ENCODE measurements at regions of chr22 and their contacts with region 1.

Region 1: DNA sequence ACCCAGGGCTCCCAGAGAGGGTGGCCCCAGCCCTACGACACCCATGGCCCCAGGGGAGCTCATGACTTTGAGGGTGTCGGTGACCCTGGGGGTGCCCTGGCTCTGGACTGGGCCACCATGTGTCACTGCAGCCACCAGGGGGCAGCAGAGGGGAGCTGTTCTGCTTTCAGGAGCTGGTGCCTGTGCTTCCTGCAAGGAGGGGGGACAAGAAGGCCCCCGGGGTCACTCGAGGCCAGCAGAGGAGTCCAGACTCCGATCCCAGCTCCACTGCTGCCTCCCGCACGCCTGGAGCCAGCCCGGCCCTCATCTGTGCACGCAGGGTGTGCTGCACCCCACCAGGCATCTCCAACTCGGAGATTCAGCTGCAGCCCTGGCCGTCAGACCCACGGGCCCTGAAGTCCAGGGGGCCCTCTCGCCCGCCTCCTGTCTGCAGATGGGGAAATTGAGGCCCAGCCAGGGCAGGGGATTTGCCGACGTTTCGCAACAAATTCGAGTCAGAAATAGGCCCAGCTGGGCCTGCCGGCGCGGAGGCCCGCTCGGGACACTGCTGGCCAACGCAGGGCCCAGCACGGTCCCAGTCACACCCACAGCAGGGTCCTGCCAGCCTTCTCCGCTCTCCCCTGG is 29.5 kb upstream of the WNT7B start:
- DNase-seq: peak; percentile 80
- ATAC-seq: peak; percentile 84
- H3K4me3 ChIP-seq: no peak overlapping the region
- H3K27ac ChIP-seq: peak overlapping the region; percentile 67
- H3K4me1 ChIP-seq: peaks cover 30% of the 10 kb centered on the region
- H3K27me3 ChIP-seq: no peaks in the 10 kb centered on the region
- CTCF ChIP-seq: peak; percentile 79
- POLR2A ChIP-seq: no peak; the same call in 1 of the 2 replicates
- RAD21 ChIP-seq: peak; percentile 87

Region 2: GRCh38 chr22:45994491-45995404 is 11.7 kb before region 1 on chr22:
- CTCF ChIA-PET with region 1: interaction called, 16 read pairs
- POLR2A ChIA-PET with region 1: no interaction called
- dilution Hi-C with region 1: no loop called
- in situ Hi-C with region 1: no loop called
- intact Hi-C with region 1: no loop called
- DNase-seq: peak; percentile 44
- ATAC-seq: peak; percentile 64
- H3K4me3 ChIP-seq: no peak overlapping the region
- H3K27ac ChIP-seq: no peak overlapping the region
- H3K4me1 ChIP-seq: peaks cover 28% of the 10 kb centered on the region
- H3K27me3 ChIP-seq: peaks cover 9% of the 10 kb centered on the region; the same call in 1 of the 2 replicates
- CTCF ChIP-seq: peak; percentile 96
- POLR2A ChIP-seq: peak; percentile 42; the same call in 1 of the 2 replicates
- RAD21 ChIP-seq: peak; percentile 96

Region 3: DNA sequence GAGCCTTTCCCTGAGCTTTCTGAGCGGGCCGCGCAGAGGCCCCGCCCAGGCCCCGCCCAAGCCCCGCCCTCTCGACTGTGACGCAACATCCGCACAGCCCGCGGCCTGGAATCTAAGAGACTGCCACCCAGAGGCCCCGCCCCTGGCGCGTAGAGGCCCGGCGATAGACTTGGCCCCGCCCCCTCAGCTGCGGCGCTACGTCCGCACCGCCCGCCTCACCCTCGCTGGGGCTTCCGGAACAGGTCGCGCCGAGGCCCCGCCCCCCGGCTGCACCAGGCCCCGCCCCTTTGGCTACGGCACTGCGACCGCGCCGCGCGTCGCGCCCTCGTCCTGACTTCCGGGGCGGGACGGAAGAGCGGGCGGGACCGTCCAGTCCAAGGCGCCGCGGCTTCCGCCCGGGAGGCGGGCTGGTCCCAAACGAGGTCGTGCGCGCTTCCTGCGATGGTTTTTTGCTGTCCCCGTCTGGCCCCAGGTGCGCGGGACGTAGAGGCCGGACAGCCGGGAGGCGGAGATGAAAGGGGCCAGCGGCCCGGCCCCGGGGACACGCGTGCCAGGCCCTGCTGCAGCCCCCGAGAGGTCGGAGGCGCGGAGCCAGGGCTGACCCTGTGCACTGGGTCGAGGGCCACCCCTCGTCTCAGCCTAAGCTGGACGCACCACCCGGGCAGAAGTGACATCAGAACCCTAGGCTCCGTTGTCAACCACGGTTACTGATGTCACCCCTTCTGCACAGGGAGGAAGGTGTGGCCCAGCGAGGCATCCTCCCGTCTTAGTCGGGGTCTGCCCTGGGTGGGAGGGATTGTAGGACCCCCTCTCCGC is 29.5 kb after region 1 on chr22:
- CTCF ChIA-PET with region 1: interaction called, 12 read pairs
- POLR2A ChIA-PET with region 1: no interaction called
- dilution Hi-C with region 1: no loop called
- in situ Hi-C with region 1: no loop called
- intact Hi-C with region 1: no loop called
- DNase-seq: peak; percentile 98
- ATAC-seq: peak; percentile 99
- H3K4me3 ChIP-seq: peak overlapping the region; percentile 94
- H3K27ac ChIP-seq: peak overlapping the region; percentile 88
- H3K4me1 ChIP-seq: peaks cover 7% of the 10 kb centered on the region
- H3K27me3 ChIP-seq: no peaks in the 10 kb centered on the region
- CTCF ChIP-seq: no peak
- POLR2A ChIP-seq: peak; percentile 65; the same call in 1 of the 2 replicates
- RAD21 ChIP-seq: no peak

Region 4: GRCh38 chr22:46116491-46116958 is 110.0 kb after region 1 on chr22:
- CTCF ChIA-PET with region 1: interaction called, 24 read pairs
- POLR2A ChIA-PET with region 1: no interaction called
- dilution Hi-C with region 1: no loop called
- in situ Hi-C with region 1: loop called (anchors 5 kb)
- intact Hi-C with region 1: loop called (anchors 1 kb)
- DNase-seq: peak; percentile 73
- ATAC-seq: peak; percentile 81
- H3K4me3 ChIP-seq: no peak overlapping the region
- H3K27ac ChIP-seq: no peak overlapping the region; the same call in 1 of the 2 replicates
- H3K4me1 ChIP-seq: peaks cover 15% of the 10 kb centered on the region
- H3K27me3 ChIP-seq: no peaks in the 10 kb centered on the region
- CTCF ChIP-seq: peak; percentile 98
- POLR2A ChIP-seq: no peak
- RAD21 ChIP-seq: peak; percentile 87